ENCODE measurements at regions of chr2 and their contacts with region 1.

Region 1: DNA sequence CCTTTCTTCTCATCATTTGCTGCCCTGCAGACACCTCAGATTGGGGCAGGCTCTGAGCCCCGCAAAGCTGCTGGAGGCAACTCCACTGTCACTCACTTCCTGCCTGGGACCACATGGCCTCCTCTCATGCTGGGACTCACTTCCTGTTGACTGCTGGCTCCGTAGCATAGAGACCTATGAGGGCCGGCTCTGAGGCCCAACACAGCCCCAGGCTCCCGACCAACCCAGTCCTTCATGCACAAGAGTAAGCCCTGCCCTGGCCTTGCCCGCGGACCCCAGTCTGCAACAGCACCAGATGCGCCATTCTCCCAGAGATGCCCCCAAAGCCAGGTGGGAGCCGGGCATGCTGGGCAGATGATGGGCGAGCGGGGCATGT is 55.7 kb downstream of the DNMT3A start:
- DNase-seq: no peak
- H3K4me3 ChIP-seq: no peak overlapping the region
- H3K27ac ChIP-seq: no peak overlapping the region
- H3K4me1 ChIP-seq: peaks cover 4% of the 10 kb centered on the region
- H3K27me3 ChIP-seq: no peaks in the 10 kb centered on the region
- CTCF ChIP-seq: no peak

Region 2: DNA sequence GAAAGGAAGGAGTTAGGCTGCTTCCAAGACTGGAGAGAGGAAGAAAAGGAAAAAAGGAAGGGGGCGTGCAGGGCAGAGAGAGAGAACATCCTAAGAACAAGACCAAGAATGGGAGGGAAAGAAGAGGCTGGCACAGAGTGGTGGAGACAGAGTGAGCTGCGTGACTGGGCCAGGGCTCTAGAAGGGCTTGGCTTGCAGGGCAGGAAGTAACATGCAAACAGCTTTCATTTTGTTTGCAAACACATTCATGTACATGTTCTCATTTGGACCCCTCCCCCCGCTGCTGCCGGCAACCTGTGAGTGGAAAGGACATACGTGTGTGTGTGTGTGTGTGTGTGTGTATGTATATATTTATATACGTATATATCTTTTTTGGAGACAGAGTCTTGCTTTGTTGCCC is 102.5 kb after region 1 on chr2:
- CTCF ChIA-PET with region 1: no interaction called
- dilution Hi-C with region 1: loop called (anchors 5 kb)
- in situ Hi-C with region 1: no loop called
- intact Hi-C with region 1: no loop called
- DNase-seq: no peak
- H3K4me3 ChIP-seq: no peak overlapping the region
- H3K27ac ChIP-seq: no peak overlapping the region
- H3K4me1 ChIP-seq: no peaks in the 10 kb centered on the region
- H3K27me3 ChIP-seq: no peaks in the 10 kb centered on the region
- CTCF ChIP-seq: no peak

Region 3: DNA sequence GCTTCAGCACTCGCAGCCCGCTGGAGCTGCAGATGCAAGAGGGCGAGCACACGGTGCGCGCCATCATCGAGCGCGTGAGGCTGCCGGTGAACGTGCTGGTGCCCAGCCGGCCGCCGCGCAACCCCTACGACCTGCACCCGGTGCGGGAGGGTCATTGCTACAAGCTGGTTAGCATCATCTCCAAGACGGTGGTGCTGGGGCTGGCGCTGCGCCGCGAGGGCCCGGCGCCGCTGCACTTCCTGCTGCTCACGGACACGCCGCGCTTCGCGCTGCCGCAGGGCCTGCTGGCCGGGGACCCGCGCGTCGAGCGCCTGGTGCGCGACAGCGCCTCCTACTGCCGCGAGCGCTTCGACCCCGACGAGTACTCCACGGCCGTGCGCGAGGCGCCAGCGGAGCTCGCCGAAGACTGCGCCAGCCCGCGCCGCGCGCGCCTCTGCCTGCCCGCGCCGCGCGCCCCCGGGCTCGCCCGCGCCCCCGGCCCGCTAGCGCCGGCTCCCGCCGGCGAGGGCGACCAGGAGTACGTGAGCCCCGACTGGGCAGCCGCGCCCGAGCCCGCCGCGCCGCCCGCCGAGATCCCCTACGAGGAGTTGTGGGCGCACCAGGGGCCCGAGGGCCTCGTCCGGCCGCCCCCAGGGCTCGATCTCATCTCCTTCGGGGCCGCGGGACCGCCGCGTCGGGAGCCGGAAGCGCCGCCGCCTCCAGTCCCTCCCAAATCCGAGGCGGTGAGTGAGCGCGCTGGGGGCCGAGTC is 898.7 kb after region 1 on chr2:
- CTCF ChIA-PET with region 1: no interaction called
- dilution Hi-C with region 1: no loop called
- in situ Hi-C with region 1: no loop called
- intact Hi-C with region 1: no loop called
- DNase-seq: peak; percentile 56
- H3K4me3 ChIP-seq: peak overlapping the region in 2 of 3 experiments; percentile 18 to 33
- H3K27ac ChIP-seq: no peak overlapping the region
- H3K4me1 ChIP-seq: peaks cover 9% of the 10 kb centered on the region
- H3K27me3 ChIP-seq: no peaks in the 10 kb centered on the region
- CTCF ChIP-seq: peak in 1 of 2 donors; percentile 41